Psoas muscle (tissue), 8 donors: ENCODE measurements at regions of chr6 and their contacts with region 1.

Region 1: GRCh38 chr6:14876778-14877613 is 368.9 kb upstream of the JARID2 start:
- DNase-seq: no peak
- ATAC-seq: peak; percentile 91 to 94 (median 92)
- H3K4me3 ChIP-seq: peak overlapping the region; percentile 22
- H3K27ac ChIP-seq: peak overlapping the region; percentile 86
- H3K4me1 ChIP-seq: peaks cover 40% of the 10 kb centered on the region
- H3K27me3 ChIP-seq: no peaks in the 10 kb centered on the region
- CTCF ChIP-seq: no peak

Region 2: GRCh38 chr6:13135152-13135551 is 1741.8 kb before region 1 on chr6:
- intact Hi-C with region 1: no loop called
- DNase-seq: no peak
- ATAC-seq: no peak
- H3K4me3 ChIP-seq: no peak overlapping the region
- H3K27ac ChIP-seq: no peak overlapping the region
- H3K4me1 ChIP-seq: no peaks in the 10 kb centered on the region
- H3K27me3 ChIP-seq: no peaks in the 10 kb centered on the region
- CTCF ChIP-seq: no peak

Region 3: GRCh38 chr6:14210663-14211561 is 666.1 kb before region 1 on chr6:
- intact Hi-C with region 1: loop called in 1 of 2 experiments (anchors 10 kb)
- DNase-seq: peak; percentile 95 to 96
- ATAC-seq: peak; percentile 95 to 97 (median 96)
- H3K4me3 ChIP-seq: peak overlapping the region; percentile 82
- H3K27ac ChIP-seq: peak overlapping the region; percentile 89
- H3K4me1 ChIP-seq: peaks cover 11% of the 10 kb centered on the region
- H3K27me3 ChIP-seq: no peaks in the 10 kb centered on the region
- CTCF ChIP-seq: peak; percentile 93

Region 4: GRCh38 chr6:14638906-14639761 is 237.9 kb before region 1 on chr6:
- intact Hi-C with region 1: loop called in 1 of 2 experiments (anchors 5 kb)
- DNase-seq: peak; percentile 34 to 85
- ATAC-seq: peak; percentile 91 to 97 (median 96)
- H3K4me3 ChIP-seq: peak overlapping the region; percentile 57
- H3K27ac ChIP-seq: peak overlapping the region; percentile 91
- H3K4me1 ChIP-seq: peaks cover 38% of the 10 kb centered on the region
- H3K27me3 ChIP-seq: no peaks in the 10 kb centered on the region
- CTCF ChIP-seq: peak; percentile 18

Region 5: DNA sequence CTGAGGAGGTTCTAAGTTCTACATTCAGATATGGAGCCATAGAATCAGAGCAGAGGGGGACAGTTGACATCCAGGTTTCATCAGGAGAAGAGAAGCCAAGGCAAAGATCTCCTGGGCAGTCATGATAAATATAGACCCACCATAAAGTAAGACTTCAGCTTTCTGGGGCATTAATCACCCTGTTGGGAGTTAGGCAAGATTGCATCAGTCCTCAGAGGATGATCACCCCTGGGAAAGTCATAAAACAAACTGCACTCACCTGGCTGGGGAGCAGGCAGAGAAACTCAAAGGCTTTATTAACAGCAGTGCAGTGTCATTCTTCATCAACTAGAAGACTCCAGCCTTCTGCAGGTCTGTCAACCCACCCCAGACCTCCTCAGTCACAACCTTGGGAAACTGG is 67.6 kb after region 1 on chr6:
- intact Hi-C with region 1: no loop called
- DNase-seq: no peak
- ATAC-seq: peak in 2 of 4 donors; percentile 41 to 53
- H3K4me3 ChIP-seq: no peak overlapping the region
- H3K27ac ChIP-seq: no peak overlapping the region
- H3K4me1 ChIP-seq: no peaks in the 10 kb centered on the region
- H3K27me3 ChIP-seq: no peaks in the 10 kb centered on the region
- CTCF ChIP-seq: no peak

Region 6: DNA sequence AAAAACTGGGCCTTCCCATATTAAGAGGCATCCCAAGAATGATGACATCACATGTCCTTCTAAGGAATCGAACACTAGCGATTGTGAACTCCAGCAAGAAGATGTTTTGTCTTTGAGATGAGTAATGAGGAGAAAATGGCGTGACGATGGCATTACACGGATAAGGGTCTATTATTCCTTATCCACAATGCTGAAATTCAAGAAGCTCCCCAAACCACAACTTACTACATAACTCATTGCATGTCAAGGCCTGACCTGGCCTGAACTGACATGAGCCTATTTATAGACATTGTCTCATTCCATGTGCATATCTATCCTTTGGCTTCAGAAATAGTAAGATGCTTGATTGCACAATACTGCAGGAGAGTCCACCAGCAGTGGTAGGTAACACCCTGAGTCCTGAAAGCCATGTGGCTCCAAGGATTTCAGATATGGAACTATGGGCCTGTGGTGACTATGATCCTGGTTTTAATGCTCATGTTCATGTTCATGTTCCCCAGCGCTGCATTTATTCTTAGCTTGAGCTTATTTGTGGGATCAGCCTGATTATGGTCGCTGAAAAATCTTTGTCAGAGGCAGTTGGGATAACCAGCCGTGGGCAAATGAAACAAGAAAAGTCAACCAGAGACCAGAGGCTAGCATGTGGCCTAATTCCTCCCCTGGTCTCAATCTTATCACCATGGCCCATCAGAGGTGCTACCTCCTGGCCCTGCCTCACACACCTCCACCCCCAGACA is 185.7 kb after region 1 on chr6:
- intact Hi-C with region 1: loop called in 1 of 2 experiments (anchors 5 kb)
- DNase-seq: no peak
- ATAC-seq: peak; percentile 87 to 95 (median 89)
- H3K4me3 ChIP-seq: no peak overlapping the region
- H3K27ac ChIP-seq: peak overlapping the region; percentile 86
- H3K4me1 ChIP-seq: peaks cover 12% of the 10 kb centered on the region
- H3K27me3 ChIP-seq: no peaks in the 10 kb centered on the region
- CTCF ChIP-seq: no peak

Region 7: GRCh38 chr6:15491255-15491985 is 614.4 kb after region 1 on chr6:
- intact Hi-C with region 1: loop called in 1 of 2 experiments (anchors 5 kb)
- DNase-seq: peak; percentile 73 to 85
- ATAC-seq: peak; percentile 27 to 63 (median 41)
- H3K4me3 ChIP-seq: no peak overlapping the region
- H3K27ac ChIP-seq: peak overlapping the region; percentile 51
- H3K4me1 ChIP-seq: peaks cover 32% of the 10 kb centered on the region
- H3K27me3 ChIP-seq: no peaks in the 10 kb centered on the region
- CTCF ChIP-seq: peak; percentile 95